Right ventricle myocardium inferior (tissue), 1 donor: ENCODE measurements at regions of chr22 and their contacts with region 1.

Region 1: GRCh38 chr22:22884010-22884887 is 3.4 kb upstream of the IGLL5 start:
- DNase-seq: no peak
- ATAC-seq: peak; percentile 70

Region 2: GRCh38 chr22:22810018-22810427 is 74.2 kb before region 1 on chr22:
- intact Hi-C with region 1: loop called (anchors 2 kb)
- DNase-seq: no peak
- ATAC-seq: peak; percentile 52

Region 3: DNA sequence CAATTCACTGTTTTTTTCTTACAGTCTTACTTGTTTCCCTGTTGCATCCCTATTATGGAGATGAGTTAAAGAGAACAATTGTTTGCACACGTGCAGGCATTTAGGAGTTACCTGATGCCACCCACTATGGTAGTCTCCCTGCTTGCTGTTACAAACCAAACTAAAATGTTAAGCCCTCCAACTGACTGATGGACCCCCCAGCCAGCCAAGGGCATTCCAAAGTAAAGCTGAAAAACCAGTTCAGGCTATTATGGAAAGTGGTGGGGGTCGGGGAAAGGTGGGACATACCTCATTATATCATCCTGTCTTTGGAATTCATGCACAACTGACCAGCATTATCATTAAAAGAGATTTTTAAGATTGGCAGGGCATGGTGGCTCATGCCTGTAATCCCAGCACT is 139.0 kb after region 1 on chr22:
- intact Hi-C with region 1: no loop called
- DNase-seq: no peak
- ATAC-seq: no peak